A673 (cell line): ENCODE measurements at regions of chr7 and their contacts with region 1.

Region 1: DNA sequence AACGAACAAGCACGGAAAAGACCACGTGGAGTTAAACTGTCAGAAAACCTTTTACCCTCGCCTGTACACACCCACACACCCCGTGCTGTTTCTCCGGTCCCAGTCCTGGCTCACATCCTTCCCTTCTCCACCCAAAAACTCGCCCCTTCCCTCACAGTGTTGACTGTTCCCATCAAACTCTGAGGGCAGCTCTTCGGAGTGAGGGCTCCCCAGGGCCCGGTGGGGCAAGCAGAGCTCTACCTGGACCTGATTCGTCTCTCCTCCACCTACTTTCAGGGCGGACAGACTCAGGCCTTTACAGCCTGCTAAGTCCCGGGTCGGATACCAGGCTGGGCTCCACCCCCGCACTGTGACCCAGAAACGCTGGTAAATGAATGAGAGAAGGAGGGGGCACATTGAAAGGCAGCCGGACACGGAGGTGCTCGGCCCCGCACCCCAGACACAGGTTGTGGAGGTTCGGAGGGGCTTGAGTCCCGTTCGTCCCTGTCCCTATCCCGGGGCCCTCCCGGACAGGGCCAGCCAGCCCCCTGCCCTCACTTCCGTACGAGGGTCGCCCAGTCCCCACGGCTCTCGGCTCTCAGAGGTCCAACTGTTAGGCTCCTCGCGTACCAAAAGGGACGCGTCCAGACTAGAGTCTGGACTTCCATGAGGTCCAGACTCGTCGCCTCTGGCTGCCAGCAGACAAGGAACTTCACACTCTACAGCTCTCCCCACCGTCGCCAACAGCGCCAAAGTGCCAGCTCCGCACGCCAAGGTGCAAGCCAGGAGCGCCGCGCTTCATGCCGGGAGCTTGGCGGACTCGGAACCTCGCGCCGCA is 31.7 kb upstream of the ASL start:
- DNase-seq: no peak
- H3K4me3 ChIP-seq: no peak overlapping the region
- H3K27ac ChIP-seq: no peak overlapping the region
- H3K4me1 ChIP-seq: no peaks in the 10 kb centered on the region
- H3K27me3 ChIP-seq: no peaks in the 10 kb centered on the region
- CTCF ChIP-seq: no peak

Region 2: GRCh38 chr7:66099616-66100474 is 56.0 kb after region 1 on chr7:
- CTCF ChIA-PET with region 1: no interaction called
- POLR2A ChIA-PET with region 1: interaction called, 10 read pairs
- intact Hi-C with region 1: no loop called
- DNase-seq: peak; percentile 79
- H3K4me3 ChIP-seq: peak overlapping the region; percentile 39
- H3K27ac ChIP-seq: peak overlapping the region; percentile 71
- H3K4me1 ChIP-seq: peaks cover 8% of the 10 kb centered on the region
- H3K27me3 ChIP-seq: no peaks in the 10 kb centered on the region
- CTCF ChIP-seq: no peak

Region 3: DNA sequence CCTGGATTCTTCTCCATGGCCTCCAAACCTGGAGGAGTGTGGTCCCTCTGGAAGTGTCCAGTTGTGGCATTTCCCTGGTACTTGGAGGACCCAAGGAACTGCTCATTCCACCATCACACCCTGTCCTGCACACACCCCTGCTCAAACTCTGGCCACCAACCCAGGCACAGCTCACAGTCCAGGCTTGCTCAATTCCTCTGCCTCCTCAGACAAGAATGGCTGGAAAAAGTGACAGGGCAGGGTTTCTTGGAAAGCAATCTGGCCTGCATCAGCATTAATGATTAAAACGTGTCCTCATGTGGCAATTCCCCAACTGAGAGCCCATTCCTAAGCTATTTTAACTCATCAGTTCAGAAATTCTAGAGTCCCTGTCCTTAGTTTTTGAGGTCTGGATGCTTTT is 144.0 kb after region 1 on chr7:
- CTCF ChIA-PET with region 1: no interaction called
- POLR2A ChIA-PET with region 1: no interaction called
- intact Hi-C with region 1: no loop called
- DNase-seq: no peak
- H3K4me3 ChIP-seq: no peak overlapping the region
- H3K27ac ChIP-seq: no peak overlapping the region
- H3K4me1 ChIP-seq: no peaks in the 10 kb centered on the region
- H3K27me3 ChIP-seq: no peaks in the 10 kb centered on the region
- CTCF ChIP-seq: no peak